A549 (cell line): ENCODE measurements at regions of chr2 and their contacts with region 1.

Region 1: GRCh38 chr2:86079981-86080911 is 25.4 kb downstream of the POLR1A start:
- DNase-seq: peak; percentile 56 to 82
- ATAC-seq: peak; percentile 87 to 95
- H3K4me3 ChIP-seq: no peak overlapping the region
- H3K27ac ChIP-seq: peak overlapping the region in 1 of 2 experiments; percentile 53; a peak in 3 of 6 replicates
- H3K4me1 ChIP-seq: peaks cover 22% of the 10 kb centered on the region; the same call in 2 of the 3 replicates
- CTCF ChIP-seq: peak; percentile 93
- EP300 ChIP-seq: no peak
- POLR2A ChIP-seq: no peak
- RAD21 ChIP-seq: peak; percentile 86 to 89

Region 2: GRCh38 chr2:85772019-85772745 is 308.1 kb before region 1 on chr2:
- CTCF ChIA-PET with region 1: interaction called, 16 read pairs
- POLR2A ChIA-PET with region 1: no interaction called
- DNase-seq: peak; percentile 90
- ATAC-seq: peak; percentile 85 to 87
- H3K4me3 ChIP-seq: peak overlapping the region; percentile 13; the same call in 1 of the 3 replicates
- H3K27ac ChIP-seq: peak overlapping the region; percentile 82 to 88
- H3K4me1 ChIP-seq: peaks cover 66% of the 10 kb centered on the region
- CTCF ChIP-seq: peak; percentile 38; the same call in 2 of the 3 replicates
- EP300 ChIP-seq: peak in 1 of 2 experiments; percentile 83; a peak in 2 of 5 replicates
- POLR2A ChIP-seq: no peak
- RAD21 ChIP-seq: peak; percentile 51 to 63

Region 3: GRCh38 chr2:85865539-85866164 is 214.6 kb before region 1 on chr2:
- CTCF ChIA-PET with region 1: interaction called, 20 read pairs
- POLR2A ChIA-PET with region 1: no interaction called
- DNase-seq: no peak
- ATAC-seq: peak in 1 of 2 experiments; percentile 13; a peak in 1 of 6 replicates
- H3K4me3 ChIP-seq: no peak overlapping the region
- H3K27ac ChIP-seq: no peak overlapping the region
- H3K4me1 ChIP-seq: no peaks in the 10 kb centered on the region
- CTCF ChIP-seq: no peak
- EP300 ChIP-seq: no peak
- POLR2A ChIP-seq: no peak
- RAD21 ChIP-seq: no peak

Region 4: DNA sequence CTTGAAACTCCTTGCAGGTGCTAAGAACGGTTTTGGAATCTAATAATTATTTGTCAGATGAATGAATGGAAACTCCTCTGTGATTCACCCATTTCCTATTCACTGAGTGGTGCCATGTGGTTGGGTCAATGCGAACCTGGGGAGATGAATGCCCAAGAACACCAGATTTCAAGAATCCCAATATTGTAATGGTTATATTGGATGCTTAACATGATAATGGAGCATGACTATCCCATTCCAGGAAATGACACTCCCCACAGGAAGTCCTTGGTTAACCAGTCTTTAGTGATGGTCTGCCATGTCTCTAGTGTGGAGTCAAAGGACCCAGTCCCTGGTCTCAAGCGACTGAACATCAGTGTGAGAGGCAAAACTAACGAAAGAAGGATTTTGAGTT is 123.6 kb before region 1 on chr2:
- CTCF ChIA-PET with region 1: interaction called, 15 read pairs
- POLR2A ChIA-PET with region 1: no interaction called
- DNase-seq: no peak
- ATAC-seq: no peak
- H3K4me3 ChIP-seq: no peak overlapping the region
- H3K27ac ChIP-seq: peak overlapping the region in 1 of 2 experiments; percentile 76; a peak in 3 of 6 replicates
- H3K4me1 ChIP-seq: peaks cover 53% of the 10 kb centered on the region
- CTCF ChIP-seq: no peak
- EP300 ChIP-seq: no peak
- POLR2A ChIP-seq: no peak
- RAD21 ChIP-seq: no peak

Region 5: GRCh38 chr2:86035883-86036668 is 44.2 kb before region 1 on chr2:
- CTCF ChIA-PET with region 1: interaction called, 57 read pairs
- POLR2A ChIA-PET with region 1: no interaction called
- DNase-seq: no peak
- ATAC-seq: peak; percentile 58 to 66; a peak in 4 of 6 replicates
- H3K4me3 ChIP-seq: no peak overlapping the region
- H3K27ac ChIP-seq: peak overlapping the region; percentile 28 to 64; a peak in 4 of 6 replicates
- H3K4me1 ChIP-seq: peaks cover 15% of the 10 kb centered on the region; the same call in 2 of the 3 replicates
- CTCF ChIP-seq: no peak
- EP300 ChIP-seq: no peak
- POLR2A ChIP-seq: no peak
- RAD21 ChIP-seq: peak in 1 of 2 experiments; percentile 15; a peak in 2 of 5 replicates

Region 6: GRCh38 chr2:86105252-86105968 is 25.2 kb after region 1 on chr2 and contains the start of gene POLR1A:
- CTCF ChIA-PET with region 1: interaction called, 17 read pairs
- POLR2A ChIA-PET with region 1: no interaction called
- DNase-seq: peak; percentile 64 to 96
- ATAC-seq: peak; percentile 96
- H3K4me3 ChIP-seq: peak within 1 kb of the TSS; percentile 82
- H3K27ac ChIP-seq: peak within 1 kb of the TSS; percentile 87 to 88
- H3K4me1 ChIP-seq: peaks cover 26% of the 10 kb centered on the region
- CTCF ChIP-seq: no peak
- EP300 ChIP-seq: no peak
- POLR2A ChIP-seq: peak; percentile 54
- RAD21 ChIP-seq: no peak
- polyA plus RNA-seq, gene POLR1A: 22.8 and 29.4 TPM in 2 replicates

Region 7: GRCh38 chr2:86201671-86202335 is 121.6 kb after region 1 on chr2:
- CTCF ChIA-PET with region 1: no interaction called
- POLR2A ChIA-PET with region 1: no interaction called
- DNase-seq: no peak
- ATAC-seq: no peak
- H3K4me3 ChIP-seq: no peak overlapping the region
- H3K27ac ChIP-seq: no peak overlapping the region
- H3K4me1 ChIP-seq: peaks cover 11% of the 10 kb centered on the region; the same call in 1 of the 3 replicates
- CTCF ChIP-seq: no peak
- EP300 ChIP-seq: no peak
- POLR2A ChIP-seq: no peak
- RAD21 ChIP-seq: no peak